ENCODE measurements at regions of chr10 and their contacts with region 1.

Region 1: DNA sequence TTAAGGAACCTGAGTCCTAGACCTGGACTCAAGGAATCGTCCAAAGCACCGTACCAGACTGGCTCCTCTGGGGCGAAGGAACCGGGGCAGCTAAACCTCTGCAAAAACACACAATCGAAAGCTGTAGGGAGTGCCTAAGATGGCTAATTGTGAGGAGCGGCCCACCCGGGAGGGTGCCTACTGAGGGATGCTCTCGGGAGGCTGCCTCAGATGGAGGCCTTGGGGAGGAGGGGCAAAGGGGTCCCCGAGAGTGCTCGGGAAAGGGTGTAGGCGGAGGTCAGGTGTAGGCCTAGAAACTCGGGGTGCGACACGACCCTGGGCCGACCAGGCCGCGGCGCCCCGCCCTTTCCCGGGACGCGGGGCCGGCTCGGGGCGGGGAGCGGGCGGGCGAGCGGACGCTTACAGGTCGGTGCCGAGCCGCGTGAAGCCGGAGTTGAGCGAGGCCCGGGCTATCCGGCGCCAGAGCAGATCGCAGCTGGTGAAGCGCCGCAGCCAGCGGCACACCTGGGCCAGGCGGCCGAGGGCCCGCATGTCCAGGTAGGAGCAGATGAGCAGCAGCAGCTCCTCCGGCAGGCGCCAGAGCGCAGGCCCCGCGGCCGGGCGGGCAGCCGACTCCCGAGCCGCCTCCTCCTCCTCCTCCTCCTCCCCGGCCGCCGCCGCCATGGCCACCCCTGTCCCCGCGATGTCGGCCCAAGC is 844 bp downstream of the FBXW4 start:
- DNase-seq: peak; percentile 8 to 84 (median 69)

Region 2: GRCh38 chr10:101646364-101646763 is 47.8 kb before region 1 on chr10:
- intact Hi-C with region 1: loop called (anchors 10 kb)
- DNase-seq: peak; percentile 28 to 87 (median 60)